ENCODE measurements at regions of chr13 and their contacts with region 1.

Region 1: DNA sequence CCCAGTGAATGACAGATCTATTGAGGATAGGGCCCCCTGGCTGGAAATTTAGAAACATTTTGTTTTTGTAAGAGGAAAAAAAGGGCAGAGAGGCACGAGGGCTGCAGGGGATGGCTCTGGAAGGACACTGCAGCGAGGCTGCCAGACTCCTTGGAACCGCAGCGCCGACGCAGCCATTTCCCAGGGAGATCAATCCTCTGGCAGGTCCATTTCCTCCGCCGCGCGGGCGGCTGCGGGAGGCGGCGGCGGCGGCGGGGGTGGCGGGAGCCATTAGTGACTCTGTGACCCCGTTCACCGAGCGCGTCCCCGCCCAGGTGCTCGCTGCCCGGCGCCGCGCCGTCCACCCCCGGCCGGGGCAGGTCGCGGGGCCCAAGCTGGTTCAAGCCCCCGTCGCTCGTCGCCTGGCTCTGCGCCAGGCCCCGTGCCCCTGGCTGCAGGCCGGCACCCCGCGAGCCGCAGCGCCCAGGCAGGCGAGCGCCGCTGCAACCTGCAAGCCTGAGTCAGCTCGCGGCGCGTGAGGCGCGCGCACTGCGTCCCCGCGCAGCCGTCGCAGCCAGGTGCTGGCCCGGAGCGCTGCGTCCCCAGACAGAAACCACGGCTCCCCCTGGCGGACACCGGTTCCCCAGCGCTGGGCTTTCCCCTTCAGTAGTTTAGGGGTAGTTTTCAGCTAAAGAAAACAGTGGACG is 192.6 kb downstream of the KATNAL1 start:
- DNase-seq: peak; percentile 96
- ATAC-seq: peak; percentile 91
- H3K4me3 Mint-ChIP-seq: peak overlapping the region; percentile 72
- H3K27ac Mint-ChIP-seq: no peak overlapping the region
- H3K4me1 Mint-ChIP-seq: peaks cover 23% of the 10 kb centered on the region
- H3K27me3 Mint-ChIP-seq: no peaks in the 10 kb centered on the region
- CTCF ChIP-seq: peak; percentile 97

Region 2: DNA sequence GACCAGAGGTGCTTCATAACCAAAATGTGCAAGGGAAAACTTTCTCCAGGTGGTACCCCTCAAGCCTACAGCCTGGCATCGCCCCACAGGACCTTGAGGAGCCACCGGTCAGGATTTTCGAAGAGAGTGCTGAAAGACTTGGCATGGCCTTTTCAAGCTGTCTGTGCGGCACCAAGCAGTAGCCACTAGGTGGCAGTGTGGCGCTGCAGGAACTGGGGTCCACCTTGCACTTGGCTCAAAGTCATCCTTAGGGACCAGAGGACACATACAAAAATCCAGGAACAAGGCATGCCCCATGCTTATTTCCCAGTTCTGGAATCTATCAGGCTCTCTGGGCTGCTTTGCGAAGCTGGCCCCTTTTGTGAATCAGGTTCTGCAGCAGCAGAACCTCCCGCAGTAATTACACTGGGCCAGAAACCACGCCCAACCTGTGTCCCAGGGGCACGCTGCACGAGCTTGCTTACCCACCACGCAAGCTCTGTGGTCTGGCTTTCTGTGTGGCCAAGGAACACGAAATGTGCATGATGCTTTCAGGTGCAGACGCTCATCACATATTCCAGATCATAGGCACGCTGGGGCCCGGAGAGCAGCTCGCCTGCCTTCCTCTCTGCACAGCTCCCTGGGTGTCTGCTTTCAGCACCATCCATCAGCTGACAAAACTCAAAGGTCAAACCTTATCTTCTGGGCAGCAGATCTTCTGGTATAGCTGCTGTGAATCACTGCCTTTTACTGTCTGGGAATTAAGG is 606.4 kb before region 1 on chr13:
- CTCF ChIA-PET with region 1: interaction called, 12 read pairs
- POLR2A ChIA-PET with region 1: no interaction called
- intact Hi-C with region 1: no loop called
- DNase-seq: peak; percentile 83
- ATAC-seq: peak; percentile 78
- H3K4me3 Mint-ChIP-seq: no peak overlapping the region
- H3K27ac Mint-ChIP-seq: no peak overlapping the region
- H3K4me1 Mint-ChIP-seq: no peaks in the 10 kb centered on the region
- H3K27me3 Mint-ChIP-seq: peaks cover 2% of the 10 kb centered on the region
- CTCF ChIP-seq: peak; percentile 92

Region 3: GRCh38 chr13:29782798-29783197 is 331.9 kb before region 1 on chr13:
- CTCF ChIA-PET with region 1: interaction called, 22 read pairs
- POLR2A ChIA-PET with region 1: no interaction called
- intact Hi-C with region 1: no loop called
- DNase-seq: peak; percentile 17
- ATAC-seq: peak; percentile 98
- H3K4me3 Mint-ChIP-seq: no peak overlapping the region
- H3K27ac Mint-ChIP-seq: peak overlapping the region; percentile 48
- H3K4me1 Mint-ChIP-seq: peaks cover 22% of the 10 kb centered on the region
- H3K27me3 Mint-ChIP-seq: no peaks in the 10 kb centered on the region
- CTCF ChIP-seq: no peak

Region 4: DNA sequence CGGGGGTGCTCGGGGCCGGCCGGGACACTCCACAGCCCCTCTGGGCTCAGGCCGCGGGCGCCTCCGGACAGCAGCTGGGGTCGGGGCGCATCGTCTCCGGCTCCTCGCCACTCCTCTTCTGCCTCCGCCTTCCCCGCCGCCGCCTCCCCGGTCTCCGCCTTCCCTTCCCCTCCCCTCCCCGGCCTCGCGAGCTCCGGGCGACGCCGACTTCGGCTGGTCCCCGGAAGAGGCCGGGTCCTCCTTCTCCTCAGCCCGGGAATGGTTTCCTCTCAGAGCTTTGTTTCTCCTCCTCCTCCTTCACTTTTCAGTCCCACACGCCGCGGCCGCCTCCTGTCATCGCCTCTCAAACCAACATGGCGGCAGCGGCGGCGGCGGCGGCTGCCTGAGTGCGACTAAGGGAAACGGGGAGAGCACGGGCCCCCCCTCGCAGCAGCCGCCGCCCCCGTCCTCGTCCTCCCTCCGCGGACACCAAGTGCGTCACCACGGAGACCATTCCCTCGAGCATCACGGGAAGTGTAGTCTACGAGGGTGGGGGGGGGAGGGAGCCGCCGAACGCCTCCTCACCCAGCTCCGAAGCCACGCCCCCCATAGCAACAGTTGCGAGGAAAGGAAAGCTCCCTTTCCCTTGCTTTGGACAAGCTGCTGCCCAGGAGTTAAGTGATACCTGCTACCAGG is 264.4 kb before region 1 on chr13 and contains the start of gene UBL3:
- CTCF ChIA-PET with region 1: interaction called, 108 read pairs
- POLR2A ChIA-PET with region 1: interaction called, 10 read pairs
- intact Hi-C with region 1: loop called (anchors 5 kb)
- DNase-seq: peak; percentile 96
- ATAC-seq: peak; percentile 91
- H3K4me3 Mint-ChIP-seq: peak within 1 kb of the TSS; percentile 92
- H3K27ac Mint-ChIP-seq: peak within 1 kb of the TSS; percentile 99
- H3K4me1 Mint-ChIP-seq: peaks cover 38% of the 10 kb centered on the region
- H3K27me3 Mint-ChIP-seq: no peaks in the 10 kb centered on the region
- CTCF ChIP-seq: no peak
- total RNA-seq, gene UBL3: 7.2 to 8.1 TPM

Region 5: GRCh38 chr13:29954082-29955028 is 160.4 kb before region 1 on chr13:
- CTCF ChIA-PET with region 1: interaction called, 12 read pairs
- POLR2A ChIA-PET with region 1: interaction called, 3 read pairs
- intact Hi-C with region 1: no loop called
- DNase-seq: peak; percentile 69
- ATAC-seq: peak; percentile 96
- H3K4me3 Mint-ChIP-seq: peak overlapping the region; percentile 61
- H3K27ac Mint-ChIP-seq: peak overlapping the region; percentile 92
- H3K4me1 Mint-ChIP-seq: peaks cover 33% of the 10 kb centered on the region
- H3K27me3 Mint-ChIP-seq: no peaks in the 10 kb centered on the region
- CTCF ChIP-seq: no peak

Region 6: GRCh38 chr13:30097089-30097488 is 17.6 kb before region 1 on chr13:
- CTCF ChIA-PET with region 1: interaction called, 10 read pairs
- POLR2A ChIA-PET with region 1: no interaction called
- intact Hi-C with region 1: no loop called
- DNase-seq: no peak
- ATAC-seq: no peak
- H3K4me3 Mint-ChIP-seq: no peak overlapping the region
- H3K27ac Mint-ChIP-seq: no peak overlapping the region
- H3K4me1 Mint-ChIP-seq: no peaks in the 10 kb centered on the region
- H3K27me3 Mint-ChIP-seq: no peaks in the 10 kb centered on the region
- CTCF ChIP-seq: no peak

Region 7: DNA sequence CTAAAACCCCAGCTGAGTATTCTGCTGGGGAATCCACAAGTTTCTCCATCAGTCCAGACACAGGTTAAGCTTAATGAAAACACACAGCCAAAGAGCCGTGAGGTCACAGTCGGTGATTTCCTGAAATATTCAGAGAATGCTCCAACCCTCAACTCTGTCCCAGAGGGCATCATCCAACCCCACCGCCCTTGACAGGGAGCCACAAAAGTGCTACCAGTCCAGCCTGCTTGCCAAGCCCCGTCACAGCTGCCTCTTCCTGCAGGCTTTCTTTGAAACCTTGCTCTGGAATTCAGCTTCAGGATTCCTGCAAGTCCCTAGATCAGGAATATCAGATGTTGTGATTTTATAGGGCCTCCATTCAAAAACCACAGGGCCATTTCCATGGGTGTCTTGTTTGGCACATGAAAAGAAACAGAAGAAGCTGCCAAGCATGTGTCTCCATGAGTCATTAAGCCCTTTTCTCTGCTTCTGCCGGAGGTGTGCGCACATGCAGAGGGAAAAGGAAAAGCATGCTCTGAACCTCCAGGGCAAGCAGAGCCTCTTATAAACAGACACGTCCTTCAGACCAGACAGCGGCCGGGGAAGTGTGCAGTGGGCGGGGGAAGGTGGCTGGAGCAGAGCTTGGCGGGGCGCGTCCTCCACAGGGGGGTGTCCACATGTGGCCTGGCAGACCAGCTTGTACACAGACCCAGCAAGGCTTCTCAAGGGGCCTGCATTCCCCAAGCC is 27.9 kb after region 1 on chr13:
- CTCF ChIA-PET with region 1: interaction called, 17 read pairs
- POLR2A ChIA-PET with region 1: interaction called, 3 read pairs
- intact Hi-C with region 1: no loop called
- DNase-seq: peak; percentile 31
- ATAC-seq: peak; percentile 20
- H3K4me3 Mint-ChIP-seq: no peak overlapping the region
- H3K27ac Mint-ChIP-seq: peak overlapping the region; percentile 56
- H3K4me1 Mint-ChIP-seq: peaks cover 46% of the 10 kb centered on the region
- H3K27me3 Mint-ChIP-seq: no peaks in the 10 kb centered on the region
- CTCF ChIP-seq: no peak